Body of pancreas (tissue), 4 donors: ENCODE measurements at regions of chr9 and their contacts with region 1.

Region 1: GRCh38 chr9:129783516-129784361 is 19.2 kb upstream of the TOR1B start:
- DNase-seq: peak; percentile 76 to 78 (median 77)
- ATAC-seq: peak; percentile 91
- H3K4me3 ChIP-seq: no peak overlapping the region
- H3K27ac ChIP-seq: no peak overlapping the region
- H3K4me1 ChIP-seq: peaks cover 5% of the 10 kb centered on the region
- H3K27me3 ChIP-seq: no peaks in the 10 kb centered on the region
- CTCF ChIP-seq: peak; percentile 74 to 91 (median 89)
- POLR2A ChIP-seq: no peak

Region 2: GRCh38 chr9:129139993-129140396 is 643.7 kb before region 1 on chr9:
- intact Hi-C with region 1: loop called (anchors 10 kb)
- DNase-seq: peak; percentile 84 to 96 (median 92)
- ATAC-seq: peak; percentile 82
- H3K4me3 ChIP-seq: no peak overlapping the region
- H3K27ac ChIP-seq: peak overlapping the region; percentile 97 to 100 (median 100)
- H3K4me1 ChIP-seq: peaks cover 61% of the 10 kb centered on the region
- H3K27me3 ChIP-seq: no peaks in the 10 kb centered on the region
- CTCF ChIP-seq: peak in 1 of 7 experiments; percentile 0
- POLR2A ChIP-seq: peak; percentile 31 to 87 (median 80)

Region 3: DNA sequence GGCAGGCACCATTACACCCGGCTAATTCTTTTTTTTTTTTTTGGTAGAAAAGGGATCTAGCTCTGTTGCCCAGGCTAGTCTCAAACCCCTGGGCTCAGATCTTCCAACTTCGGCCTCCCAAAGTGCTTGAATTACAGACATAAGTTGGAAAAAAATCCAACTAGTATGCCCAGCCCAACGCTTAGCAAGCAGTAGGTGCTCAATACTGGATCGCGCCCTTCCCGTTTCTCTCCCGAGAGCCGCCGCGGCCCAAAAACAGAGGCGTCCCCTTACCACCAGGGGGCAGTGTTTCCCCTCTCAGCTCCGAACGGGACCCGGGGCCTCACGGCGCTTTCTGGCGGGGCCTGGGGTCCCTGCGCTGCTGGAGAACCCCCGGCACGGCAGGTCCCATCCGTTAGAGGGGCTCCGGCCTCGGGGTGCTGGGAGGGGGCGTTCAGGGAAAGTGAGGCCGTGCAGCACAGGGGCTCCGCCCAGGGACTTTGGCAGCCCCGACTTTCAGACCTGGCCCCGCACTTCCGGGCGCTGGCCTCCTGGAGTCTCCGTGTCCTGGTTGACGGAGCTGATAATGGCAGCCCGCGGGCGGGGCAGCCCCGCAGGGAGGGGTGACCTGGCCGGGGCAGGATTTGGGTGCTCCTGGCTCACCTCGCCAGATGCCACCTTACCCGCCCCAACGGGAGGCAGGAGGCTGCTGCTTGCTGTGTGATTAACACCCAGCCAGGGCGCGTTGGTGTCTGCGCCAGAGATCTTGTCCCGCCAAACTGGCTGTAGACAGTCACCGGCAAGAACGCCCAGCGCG is 46.1 kb before region 1 on chr9:
- intact Hi-C with region 1: loop called (anchors 5 kb)
- DNase-seq: peak; percentile 86 to 90 (median 87)
- ATAC-seq: peak; percentile 94
- H3K4me3 ChIP-seq: no peak overlapping the region
- H3K27ac ChIP-seq: peak overlapping the region in 3 of 4 donors; percentile 49 to 72 (median 72)
- H3K4me1 ChIP-seq: peaks cover 14% of the 10 kb centered on the region
- H3K27me3 ChIP-seq: no peaks in the 10 kb centered on the region
- CTCF ChIP-seq: peak; percentile 92 to 98 (median 96)
- POLR2A ChIP-seq: peak in 2 of 3 donors; percentile 46 to 61